T-cell (primary cell): ENCODE measurements at regions of chr3 and their contacts with region 1.

Region 1: DNA sequence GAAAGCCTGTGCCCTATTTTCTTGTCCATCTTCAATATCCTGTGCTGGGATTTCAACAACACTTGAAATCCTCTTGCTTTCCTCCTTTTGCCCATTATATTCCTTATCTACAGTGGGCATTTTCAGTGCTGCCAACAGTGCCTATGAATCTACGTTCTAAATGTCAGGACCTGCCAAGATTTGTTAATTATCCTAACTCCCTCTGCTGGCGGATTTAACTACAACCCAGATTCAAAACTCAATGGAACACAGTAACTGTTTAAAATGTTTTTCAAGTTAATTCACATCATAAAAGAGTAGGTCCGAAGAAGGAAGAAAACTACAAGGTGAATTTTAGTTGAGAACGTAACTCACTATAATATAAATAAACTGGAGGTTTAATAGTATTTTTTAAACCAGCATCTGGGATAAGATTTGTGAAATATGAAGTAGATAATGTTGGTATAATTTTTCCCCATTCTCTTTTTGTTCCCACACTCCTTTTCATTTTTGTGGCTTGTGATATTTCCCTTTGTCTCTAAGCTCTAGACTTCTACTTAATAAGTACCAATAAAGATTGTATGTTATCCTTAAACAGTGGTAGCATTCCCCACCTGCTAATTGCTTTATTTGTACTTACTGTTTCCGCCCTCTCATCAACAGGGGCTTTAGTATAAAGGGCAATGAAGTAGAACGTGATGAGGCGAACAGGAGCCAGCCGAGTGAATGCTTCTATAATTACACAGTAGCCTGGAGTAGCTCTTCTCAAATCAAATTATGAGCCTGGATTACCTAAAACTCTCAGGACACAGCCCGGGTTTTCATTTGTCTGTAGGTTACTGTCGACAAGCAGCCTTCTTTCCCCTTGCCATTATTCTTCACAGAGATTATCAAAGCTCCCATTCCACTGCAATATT is 302.5 kb upstream of the ATP11B start:
- DNase-seq: no peak
- ATAC-seq: no peak
- H3K4me3 ChIP-seq: no peak overlapping the region
- H3K4me3 Mint-ChIP-seq: no peak overlapping the region
- H3K27ac ChIP-seq: no peak overlapping the region
- H3K27ac Mint-ChIP-seq: no peak overlapping the region
- H3K4me1 ChIP-seq: no peaks in the 10 kb centered on the region
- H3K4me1 Mint-ChIP-seq: no peaks in the 10 kb centered on the region
- H3K27me3 ChIP-seq: no peaks in the 10 kb centered on the region
- H3K27me3 Mint-ChIP-seq: no peaks in the 10 kb centered on the region

Region 2: DNA sequence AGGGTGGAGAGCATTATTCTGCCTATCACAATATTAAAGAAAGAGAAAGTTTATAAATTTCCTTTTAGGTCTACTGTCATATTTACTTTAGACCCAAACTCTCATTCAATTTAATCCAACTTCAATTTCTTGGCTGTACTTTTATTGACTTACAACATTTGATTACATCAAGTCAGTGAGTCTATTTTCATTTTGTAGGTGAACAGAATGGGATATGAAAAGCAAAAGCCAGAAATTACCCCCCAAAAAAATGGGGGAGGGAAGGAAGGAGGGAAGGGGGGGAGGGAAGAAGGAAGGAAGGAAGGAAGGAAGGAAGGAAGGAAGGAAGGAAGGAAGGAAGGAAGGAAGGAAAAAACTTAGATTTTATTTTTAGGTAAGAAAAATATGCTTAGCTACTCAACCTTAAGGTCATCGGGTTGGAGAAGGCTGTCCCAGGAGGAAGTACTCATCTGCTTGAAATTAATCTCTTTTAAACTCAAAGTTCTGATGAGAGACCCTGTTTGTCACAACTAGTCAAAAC is 17.6 kb before region 1 on chr3:
- CTCF ChIA-PET with region 1: interaction called in 1 of 2 experiments, 3 read pairs
- POLR2A ChIA-PET with region 1: interaction called, 3 to 16 read pairs
- DNase-seq: no peak
- ATAC-seq: no peak
- H3K4me3 ChIP-seq: no peak overlapping the region
- H3K4me3 Mint-ChIP-seq: no peak overlapping the region
- H3K27ac ChIP-seq: no peak overlapping the region
- H3K27ac Mint-ChIP-seq: no peak overlapping the region
- H3K4me1 ChIP-seq: no peaks in the 10 kb centered on the region
- H3K4me1 Mint-ChIP-seq: no peaks in the 10 kb centered on the region
- H3K27me3 ChIP-seq: no peaks in the 10 kb centered on the region
- H3K27me3 Mint-ChIP-seq: peaks cover 0 to 7% of the 10 kb centered on the region in 2 donors